Spleen (tissue), 13 donors: ENCODE measurements at regions of chr10 and their contacts with region 1.

Region 1: GRCh38 chr10:51508156-51508555 is 191.2 kb downstream of the CSTF2T start:
- DNase-seq: no peak
- H3K4me3 ChIP-seq: no peak overlapping the region
- H3K27ac ChIP-seq: no peak overlapping the region
- H3K4me1 ChIP-seq: no peaks in the 10 kb centered on the region
- H3K27me3 ChIP-seq: no peaks in the 10 kb centered on the region
- CTCF ChIP-seq: no peak
- POLR2A ChIP-seq: no peak

Region 2: DNA sequence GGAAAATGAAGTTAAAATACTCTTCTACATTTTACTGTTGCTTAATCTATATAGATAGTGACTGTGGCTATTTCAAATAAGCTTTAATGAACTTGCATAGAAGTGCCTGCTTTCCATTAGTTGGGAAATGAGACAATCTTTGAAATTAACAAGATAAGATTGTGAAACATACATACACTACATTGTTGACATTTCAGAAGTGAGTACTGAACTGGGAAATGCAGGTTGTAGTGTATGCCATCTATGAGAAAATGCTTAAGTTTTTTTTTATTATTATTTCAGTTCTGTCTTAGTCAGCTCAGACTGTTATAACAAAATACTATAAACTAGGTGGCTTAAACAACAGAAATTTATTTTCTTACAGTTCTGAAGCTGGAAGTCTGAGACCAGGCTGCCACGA is 240.8 kb after region 1 on chr10:
- intact Hi-C with region 1: loop called (anchors 5 kb)
- DNase-seq: no peak
- H3K4me3 ChIP-seq: no peak overlapping the region
- H3K27ac ChIP-seq: no peak overlapping the region
- H3K4me1 ChIP-seq: no peaks in the 10 kb centered on the region
- H3K27me3 ChIP-seq: no peaks in the 10 kb centered on the region
- CTCF ChIP-seq: no peak
- POLR2A ChIP-seq: no peak